ENCODE measurements at regions of chr3 and their contacts with region 1.

Region 1: DNA sequence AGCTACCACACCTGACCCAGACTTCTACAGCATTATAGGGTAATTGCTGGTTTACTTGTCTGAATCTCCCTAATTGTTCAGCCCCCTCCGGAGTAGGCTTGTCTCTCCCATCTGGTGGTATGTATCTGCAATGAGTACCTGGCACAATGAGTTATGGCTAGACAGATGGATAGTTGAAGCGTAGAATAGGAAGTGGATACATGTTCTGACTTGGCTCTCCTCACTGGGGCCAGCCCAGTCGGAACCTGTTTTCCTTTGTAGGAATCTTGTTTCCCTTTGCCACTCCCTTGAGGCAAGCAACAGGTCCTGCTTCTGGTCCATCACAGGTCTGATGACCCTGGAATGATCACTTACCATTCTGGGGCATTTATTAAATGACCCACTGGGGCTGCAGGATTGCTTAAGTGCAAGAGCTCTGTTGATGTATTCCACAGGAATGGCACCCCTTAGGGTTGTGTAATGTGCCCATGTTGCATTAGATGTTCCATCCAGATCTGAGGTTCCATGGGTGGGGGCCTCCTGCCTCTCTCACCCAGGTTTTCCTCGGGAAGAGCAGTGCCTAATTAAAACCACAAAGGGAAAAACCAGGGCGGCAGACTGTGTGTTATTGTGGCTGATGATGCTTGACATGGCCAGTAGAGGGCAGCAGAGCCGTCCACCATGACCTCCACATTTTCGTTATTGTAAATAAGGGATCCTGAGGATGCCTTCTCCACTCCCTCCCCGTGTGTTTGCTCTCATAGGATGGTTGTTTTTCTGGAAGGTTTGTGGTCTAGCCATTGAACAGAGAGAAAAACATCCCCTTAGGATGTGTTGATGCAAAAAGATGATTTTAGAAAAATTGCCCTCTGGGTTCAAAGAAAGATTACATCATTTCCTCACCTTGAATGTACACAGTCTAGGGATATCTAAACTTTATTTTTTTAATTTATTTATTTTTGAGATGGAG is 58.0 kb downstream of the CMTM8 start:
- DNase-seq: peak; percentile 78
- ATAC-seq: peak; percentile 81
- H3K4me3 Mint-ChIP-seq: peak overlapping the region; percentile 46
- H3K27ac Mint-ChIP-seq: peak overlapping the region; percentile 67
- H3K4me1 Mint-ChIP-seq: peaks cover 33% of the 10 kb centered on the region
- H3K27me3 Mint-ChIP-seq: no peaks in the 10 kb centered on the region

Region 2: DNA sequence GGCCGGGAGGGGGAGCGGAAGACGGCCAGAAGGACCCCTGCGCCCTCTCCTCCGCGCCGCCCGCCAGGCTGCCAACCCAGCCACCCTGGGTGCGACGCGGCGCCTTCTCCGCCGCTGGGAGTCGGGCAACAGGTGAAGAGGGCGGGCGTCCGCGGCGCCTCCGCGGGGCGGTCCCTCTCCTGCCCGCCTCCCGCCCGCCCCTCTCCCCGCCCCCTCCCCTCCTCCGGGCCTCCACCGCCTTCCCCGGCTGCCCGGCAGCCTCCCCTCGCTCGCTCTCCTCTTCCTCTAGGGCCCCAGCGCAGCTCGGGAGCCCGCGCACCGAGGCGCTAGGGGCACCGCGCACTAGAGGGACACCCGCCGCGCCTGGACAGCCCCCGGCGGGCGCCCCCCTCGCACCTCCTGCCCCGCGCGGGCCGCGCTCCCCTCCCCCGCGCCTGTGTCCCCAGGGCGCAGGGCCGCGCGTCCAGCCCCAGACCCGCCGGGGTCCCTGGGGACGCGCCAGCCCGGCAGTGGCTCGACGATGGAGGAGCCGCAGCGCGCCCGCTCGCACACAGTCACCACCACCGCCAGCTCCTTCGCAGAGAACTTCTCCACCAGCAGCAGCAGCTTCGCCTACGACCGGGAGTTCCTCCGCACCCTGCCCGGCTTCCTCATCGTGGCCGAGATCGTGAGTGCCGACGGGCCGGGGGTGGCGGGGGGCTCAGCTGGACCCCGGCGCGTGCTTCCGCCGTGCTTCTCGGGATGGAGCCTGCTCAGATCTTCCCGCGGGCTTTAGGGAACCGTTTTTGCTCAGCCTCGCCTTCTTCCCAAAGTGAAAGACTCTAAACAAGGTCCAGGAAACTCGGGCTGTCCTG is 57.9 kb before region 1 on chr3 and contains the start of gene CMTM8:
- CTCF ChIA-PET with region 1: interaction called, 29 read pairs
- POLR2A ChIA-PET with region 1: no interaction called
- intact Hi-C with region 1: no loop called
- DNase-seq: peak; percentile 84
- ATAC-seq: peak; percentile 86
- H3K4me3 Mint-ChIP-seq: peak within 1 kb of the TSS; percentile 82
- H3K27ac Mint-ChIP-seq: peak within 1 kb of the TSS; percentile 45
- H3K4me1 Mint-ChIP-seq: peaks cover 27% of the 10 kb centered on the region
- H3K27me3 Mint-ChIP-seq: peaks cover 8% of the 10 kb centered on the region
- total RNA-seq, gene CMTM8: 8.1 to 9.3 TPM

Region 3: DNA sequence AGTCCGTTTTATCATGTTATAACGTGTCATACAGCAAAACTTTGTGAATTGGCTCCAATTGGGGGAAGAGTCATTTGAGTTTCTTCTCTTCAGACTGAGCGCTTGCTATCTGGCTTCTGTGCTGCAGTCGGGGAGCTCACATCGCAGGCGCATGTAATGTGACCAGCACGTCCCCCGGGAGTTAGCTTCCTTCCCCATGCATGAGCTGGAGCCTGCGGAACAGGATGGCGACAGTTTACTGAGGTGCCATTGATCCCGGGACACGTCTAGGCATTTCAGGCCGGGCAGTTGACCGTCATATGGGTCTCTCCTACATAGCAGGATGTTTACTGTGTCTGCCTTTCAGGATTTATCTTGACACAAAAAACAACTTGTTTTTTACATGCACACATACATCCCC is 13.2 kb before region 1 on chr3:
- CTCF ChIA-PET with region 1: interaction called, 41 read pairs
- POLR2A ChIA-PET with region 1: no interaction called
- intact Hi-C with region 1: no loop called
- DNase-seq: no peak
- ATAC-seq: no peak
- H3K4me3 Mint-ChIP-seq: no peak overlapping the region
- H3K27ac Mint-ChIP-seq: no peak overlapping the region
- H3K4me1 Mint-ChIP-seq: peaks cover 33% of the 10 kb centered on the region
- H3K27me3 Mint-ChIP-seq: no peaks in the 10 kb centered on the region

Region 4: DNA sequence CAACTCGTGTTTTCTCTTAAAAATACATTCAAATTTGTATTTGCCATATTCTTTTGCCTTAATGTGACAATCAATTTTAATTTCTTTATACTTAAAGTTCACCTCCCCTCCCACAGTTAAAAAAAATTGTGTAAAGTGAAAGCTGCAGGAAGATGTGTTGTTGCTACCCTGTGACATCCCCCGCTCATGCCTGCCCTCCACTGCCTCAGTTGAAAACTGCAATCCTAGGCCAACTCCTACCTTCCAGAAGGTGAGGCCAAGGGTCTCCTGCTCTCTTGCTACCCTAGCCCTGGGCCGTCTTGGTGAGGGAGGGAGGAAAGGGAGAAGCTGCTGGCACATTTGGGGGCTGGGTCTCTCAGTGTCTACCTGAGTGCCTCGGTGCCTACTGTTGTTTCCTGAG is 38.1 kb after region 1 on chr3:
- CTCF ChIA-PET with region 1: interaction called, 50 read pairs
- POLR2A ChIA-PET with region 1: no interaction called
- intact Hi-C with region 1: loop called (anchors 1 kb)
- DNase-seq: peak; percentile 80
- ATAC-seq: peak; percentile 91
- H3K4me3 Mint-ChIP-seq: no peak overlapping the region
- H3K27ac Mint-ChIP-seq: peak overlapping the region; percentile 48
- H3K4me1 Mint-ChIP-seq: peaks cover 52% of the 10 kb centered on the region
- H3K27me3 Mint-ChIP-seq: no peaks in the 10 kb centered on the region

Region 5: GRCh38 chr3:32401556-32402081 is 105.1 kb after region 1 on chr3:
- CTCF ChIA-PET with region 1: interaction called, 5 read pairs
- POLR2A ChIA-PET with region 1: no interaction called
- intact Hi-C with region 1: loop called (anchors 1 to 2 kb)
- DNase-seq: peak; percentile 79
- ATAC-seq: peak; percentile 78
- H3K4me3 Mint-ChIP-seq: peak overlapping the region; percentile 90
- H3K27ac Mint-ChIP-seq: peak overlapping the region; percentile 100
- H3K4me1 Mint-ChIP-seq: peaks cover 71% of the 10 kb centered on the region
- H3K27me3 Mint-ChIP-seq: no peaks in the 10 kb centered on the region

Region 6: GRCh38 chr3:32448686-32449474 is 152.3 kb after region 1 on chr3:
- CTCF ChIA-PET with region 1: no interaction called
- POLR2A ChIA-PET with region 1: no interaction called
- intact Hi-C with region 1: no loop called
- DNase-seq: no peak
- ATAC-seq: no peak
- H3K4me3 Mint-ChIP-seq: no peak overlapping the region
- H3K27ac Mint-ChIP-seq: peak overlapping the region; percentile 53
- H3K4me1 Mint-ChIP-seq: peaks cover 38% of the 10 kb centered on the region
- H3K27me3 Mint-ChIP-seq: no peaks in the 10 kb centered on the region

Region 7: DNA sequence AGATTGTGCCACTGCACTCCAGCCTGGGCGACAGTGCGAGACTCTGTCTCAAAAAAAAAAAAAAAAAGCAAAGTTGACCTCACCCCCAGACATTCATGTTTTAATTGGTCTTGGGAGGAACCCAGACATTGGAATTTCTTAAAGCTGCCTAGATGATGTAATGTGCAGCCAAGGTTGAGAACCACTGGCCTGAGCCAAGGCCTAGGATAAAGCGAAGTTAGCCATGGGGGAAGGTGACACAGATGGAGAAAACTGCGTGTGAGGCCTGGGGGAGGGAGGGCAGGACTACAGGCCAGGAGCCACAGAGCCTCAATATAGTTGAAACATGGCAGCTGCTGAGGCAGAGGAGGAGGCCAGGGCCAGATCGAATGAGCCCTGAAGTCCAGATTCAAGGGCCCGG is 779.5 kb after region 1 on chr3:
- CTCF ChIA-PET with region 1: no interaction called
- POLR2A ChIA-PET with region 1: no interaction called
- intact Hi-C with region 1: no loop called
- DNase-seq: no peak
- ATAC-seq: no peak
- H3K4me3 Mint-ChIP-seq: no peak overlapping the region
- H3K27ac Mint-ChIP-seq: peak overlapping the region; percentile 23
- H3K4me1 Mint-ChIP-seq: peaks cover 21% of the 10 kb centered on the region
- H3K27me3 Mint-ChIP-seq: no peaks in the 10 kb centered on the region

Measured in activated CD4-positive, alpha-beta T cell treated with anti-CD3 and anti-CD28 coated beads for 36 hours (primary cell).